ENCODE measurements at regions of chr17 and their contacts with region 1.

Region 1: GRCh38 chr17:38853292-38854219 is at the start of gene RPL23:
- DNase-seq: peak; percentile 85 to 90
- H3K4me3 ChIP-seq: peak within 1 kb of the TSS; percentile 90 to 100 (median 97)
- H3K27ac ChIP-seq: peak within 1 kb of the TSS; percentile 97
- H3K4me1 ChIP-seq: peaks cover 3 to 10% (median 5%) of the 10 kb centered on the region in 4 experiments; a peak in 5 of 7 replicates
- H3K27me3 ChIP-seq: no peaks in the 10 kb centered on the region
- CTCF ChIP-seq: no peak
- EP300 ChIP-seq: peak in 1 of 2 experiments; percentile 28; a peak in 1 of 3 replicates
- POLR2A ChIP-seq: peak; percentile 92 to 97
- RAD21 ChIP-seq: no peak
- total RNA-seq, gene RPL23: 2,091 and 2,148 TPM in 2 replicates

Region 2: DNA sequence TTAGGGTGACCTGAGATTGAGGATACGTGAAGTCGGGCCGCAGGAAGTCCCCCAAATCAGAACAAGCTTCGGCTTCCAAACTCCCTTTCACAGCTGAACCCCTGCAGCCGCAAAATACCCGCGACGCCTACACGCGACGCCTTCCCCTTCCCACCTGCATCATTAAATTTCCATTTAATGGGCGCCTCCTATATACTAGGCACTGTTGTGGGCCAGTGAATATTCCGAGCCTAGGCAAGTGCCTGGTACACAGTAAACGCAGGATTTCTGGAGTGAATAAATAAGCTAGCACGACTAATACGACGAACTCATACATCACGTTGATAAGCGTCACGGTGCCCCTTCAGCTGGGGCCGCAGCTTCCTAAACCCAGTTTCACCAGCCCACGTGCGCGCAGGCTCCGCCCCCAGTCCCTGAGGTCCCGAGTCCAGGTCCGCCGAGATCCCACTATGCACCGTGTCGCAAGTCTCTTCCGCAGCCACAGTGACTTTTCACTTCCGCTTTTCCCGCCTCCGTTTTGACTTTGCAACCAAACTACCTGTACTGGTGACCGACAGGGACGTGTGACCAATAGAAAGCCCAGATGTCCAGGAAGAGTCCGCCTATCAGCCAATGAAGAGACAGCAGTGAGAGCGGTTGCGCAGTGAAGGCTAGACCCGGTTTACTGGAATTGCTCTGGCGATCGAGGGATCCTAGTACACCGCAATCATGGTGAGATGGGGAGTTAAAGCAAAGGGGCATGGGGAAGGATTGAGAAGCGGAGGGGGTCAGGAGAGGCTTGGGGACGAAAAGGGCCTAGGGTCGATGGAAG is 101.2 kb before region 1 on chr17 and contains the start of gene PSMB3:
- CTCF ChIA-PET with region 1: interaction called, 5 read pairs
- POLR2A ChIA-PET with region 1: interaction called, 22 read pairs
- DNase-seq: peak; percentile 88 to 96
- H3K4me3 ChIP-seq: peak within 1 kb of the TSS; percentile 86 to 99 (median 90)
- H3K27ac ChIP-seq: peak within 1 kb of the TSS; percentile 67; the same call in 1 of the 2 replicates
- H3K4me1 ChIP-seq: peaks cover 0 to 5% (median 3%) of the 10 kb centered on the region in 4 experiments; a peak in 4 of 7 replicates
- H3K27me3 ChIP-seq: peaks cover 0 to 11% (median 5%) of the 10 kb centered on the region in 4 experiments; a peak in 5 of 7 replicates
- CTCF ChIP-seq: 0 out of 4 replicates have a peak, but pooled peaks of 1 of the 3 experiments have one; percentile 3
- EP300 ChIP-seq: no peak
- POLR2A ChIP-seq: peak in 1 of 2 experiments; percentile 75; a peak in 1 of 3 replicates
- RAD21 ChIP-seq: no peak
- total RNA-seq, gene PSMB3: 291 and 301 TPM in 2 replicates

Region 3: GRCh38 chr17:38824899-38825761 is 28.4 kb before region 1 on chr17 and contains the start of gene CWC25:
- CTCF ChIA-PET with region 1: interaction called, 3 read pairs
- POLR2A ChIA-PET with region 1: interaction called, 337 read pairs
- DNase-seq: peak; percentile 93 to 100
- H3K4me3 ChIP-seq: peak within 1 kb of the TSS; percentile 59 to 94 (median 91)
- H3K27ac ChIP-seq: peak within 1 kb of the TSS; percentile 99
- H3K4me1 ChIP-seq: peaks cover 0 to 3% (median 1%) of the 10 kb centered on the region in 4 experiments; a peak in 2 of 7 replicates
- H3K27me3 ChIP-seq: no peaks in the 10 kb centered on the region
- CTCF ChIP-seq: no peak
- EP300 ChIP-seq: peak in 1 of 2 experiments; percentile 97; a peak in 2 of 3 replicates
- POLR2A ChIP-seq: peak; percentile 91 to 99
- RAD21 ChIP-seq: no peak
- total RNA-seq, gene CWC25: 13.1 and 15.8 TPM in 2 replicates

Region 4: DNA sequence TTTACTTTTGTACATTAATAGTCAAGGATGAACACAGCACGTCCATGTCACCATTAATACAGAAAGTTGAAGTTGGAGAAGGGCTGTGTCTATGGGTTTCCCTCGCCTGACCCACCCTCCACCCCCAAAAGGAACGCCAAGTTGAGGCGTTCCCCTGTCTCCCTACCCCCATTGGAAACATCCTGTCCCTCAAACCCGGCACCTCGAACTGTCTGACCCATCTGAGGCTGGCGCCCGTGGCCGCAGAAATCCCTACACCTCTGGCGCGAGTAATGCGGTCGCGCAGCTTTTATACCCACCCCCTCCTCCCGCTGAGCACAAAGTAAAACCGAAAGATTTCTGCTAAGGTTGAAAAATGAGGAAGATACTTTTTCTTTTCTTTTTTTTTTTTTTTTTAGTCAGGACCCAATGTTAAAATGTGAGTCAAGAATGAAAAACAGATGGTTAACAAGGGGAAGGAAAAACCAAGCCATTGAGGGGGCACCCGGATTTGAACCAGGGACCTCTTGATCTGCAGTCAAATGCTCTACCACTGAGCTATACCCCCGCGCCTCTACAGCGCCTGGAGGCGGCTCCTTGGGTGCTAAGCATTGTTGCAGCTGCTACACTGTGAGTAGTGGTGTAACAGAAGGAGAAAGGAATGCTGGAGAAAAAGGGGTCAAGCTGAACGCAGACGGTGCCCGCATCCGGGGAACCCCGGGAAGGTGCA is 15.4 kb after region 1 on chr17:
- CTCF ChIA-PET with region 1: interaction called, 9 read pairs
- POLR2A ChIA-PET with region 1: interaction called, 468 read pairs
- DNase-seq: peak; percentile 54 to 99
- H3K4me3 ChIP-seq: peak overlapping the region; percentile 88 to 100 (median 98)
- H3K27ac ChIP-seq: peak overlapping the region; percentile 81
- H3K4me1 ChIP-seq: peaks cover 0 to 24% (median 13%) of the 10 kb centered on the region in 4 experiments; a peak in 6 of 7 replicates
- H3K27me3 ChIP-seq: no peaks in the 10 kb centered on the region
- CTCF ChIP-seq: peak; percentile 38 to 52 (median 41)
- EP300 ChIP-seq: no peak
- POLR2A ChIP-seq: peak in 1 of 2 experiments; percentile 27; a peak in 2 of 3 replicates
- RAD21 ChIP-seq: no peak; a peak in 1 of 4 replicates

Region 5: GRCh38 chr17:38898812-38899348 is 45.3 kb after region 1 on chr17:
- CTCF ChIA-PET with region 1: no interaction called
- POLR2A ChIA-PET with region 1: interaction called, 19 read pairs
- DNase-seq: no peak
- H3K4me3 ChIP-seq: no peak overlapping the region
- H3K27ac ChIP-seq: no peak overlapping the region
- H3K4me1 ChIP-seq: peaks cover 0 to 5% (median 4%) of the 10 kb centered on the region in 4 experiments; a peak in 5 of 7 replicates
- H3K27me3 ChIP-seq: no peaks in the 10 kb centered on the region
- CTCF ChIP-seq: no peak
- EP300 ChIP-seq: no peak
- POLR2A ChIP-seq: no peak
- RAD21 ChIP-seq: no peak

Region 6: DNA sequence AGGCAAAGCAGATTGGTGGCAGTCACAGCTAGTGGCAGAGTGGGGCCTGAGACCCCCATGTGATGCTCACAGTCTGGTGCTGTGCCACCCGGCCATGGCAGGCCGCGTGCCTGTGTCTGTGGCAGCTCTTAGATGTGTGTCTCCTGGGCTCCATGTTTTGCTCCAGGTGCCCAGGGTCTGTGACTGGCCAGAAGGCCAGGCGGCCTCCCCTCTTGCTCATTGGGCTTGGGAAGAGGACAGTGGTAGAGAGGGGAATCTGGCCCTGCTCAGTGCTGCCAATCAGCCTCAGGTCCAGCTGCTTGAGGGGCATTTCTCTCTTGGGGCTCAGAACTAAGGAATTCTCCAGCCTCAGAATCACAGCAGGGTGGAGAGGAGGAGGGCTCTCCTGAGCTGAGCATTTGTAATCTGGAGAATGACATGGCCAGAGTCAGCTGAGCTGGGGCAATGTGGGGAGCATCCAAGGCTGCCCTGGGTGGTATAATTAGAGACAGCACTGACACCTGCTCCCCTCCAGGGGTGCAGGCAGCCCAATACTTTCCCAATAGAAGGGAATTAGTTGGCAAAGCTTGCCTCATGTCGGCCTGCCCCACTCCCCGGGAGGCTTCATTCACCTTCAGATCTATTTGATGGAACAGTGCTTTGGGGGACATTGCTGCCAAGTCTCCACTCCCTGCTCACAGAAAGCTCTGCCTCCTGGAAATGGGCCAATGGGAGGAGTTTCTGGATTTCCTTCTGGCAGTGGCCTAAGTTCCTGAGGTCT is 69.2 kb after region 1 on chr17:
- CTCF ChIA-PET with region 1: interaction called, 10 read pairs
- POLR2A ChIA-PET with region 1: interaction called, 51 read pairs
- DNase-seq: peak in 1 of 2 experiments; percentile 63
- H3K4me3 ChIP-seq: no peak overlapping the region
- H3K27ac ChIP-seq: peak overlapping the region; percentile 53; the same call in 1 of the 2 replicates
- H3K4me1 ChIP-seq: peaks cover 0 to 13% (median 9%) of the 10 kb centered on the region in 4 experiments; a peak in 6 of 7 replicates
- H3K27me3 ChIP-seq: no peaks in the 10 kb centered on the region
- CTCF ChIP-seq: peak in 2 of 3 experiments; percentile 4 to 21; a peak in 2 of 4 replicates
- EP300 ChIP-seq: no peak
- POLR2A ChIP-seq: no peak
- RAD21 ChIP-seq: peak in 1 of 2 experiments; percentile 1; a peak in 2 of 4 replicates